GM10248 (cell line): ENCODE measurements at regions of chr14 and their contacts with region 1.

Region 1: DNA sequence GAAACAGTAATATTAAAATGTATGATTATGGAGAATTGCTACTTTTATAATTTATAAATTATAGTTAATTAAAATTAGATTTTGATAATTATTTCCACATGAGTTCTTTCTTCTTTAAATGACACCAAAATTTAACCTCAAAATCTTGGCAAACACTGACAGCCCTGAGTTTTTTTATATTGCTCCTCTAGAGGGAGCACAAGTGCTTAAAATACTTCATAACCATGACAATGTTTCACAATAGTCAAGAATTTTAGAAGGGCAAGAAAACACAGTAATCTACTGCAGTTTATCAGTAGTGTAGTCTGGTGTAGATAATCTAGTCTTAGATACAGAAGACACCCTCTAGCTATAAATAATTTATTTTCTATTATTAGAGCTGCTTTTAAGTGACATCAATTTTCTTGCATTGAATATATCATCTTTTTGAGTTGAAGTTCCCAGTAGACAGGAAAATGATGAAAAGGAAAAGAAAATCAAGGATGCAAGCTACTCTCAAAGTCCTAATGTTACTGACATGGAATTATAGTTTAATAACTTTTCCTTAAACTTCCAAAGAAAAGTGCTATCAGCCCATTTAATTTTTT is 14.3 kb upstream of the PTGER2 start:
- DNase-seq: peak; percentile 57
- CTCF ChIP-seq: peak; percentile 66

Region 2: DNA sequence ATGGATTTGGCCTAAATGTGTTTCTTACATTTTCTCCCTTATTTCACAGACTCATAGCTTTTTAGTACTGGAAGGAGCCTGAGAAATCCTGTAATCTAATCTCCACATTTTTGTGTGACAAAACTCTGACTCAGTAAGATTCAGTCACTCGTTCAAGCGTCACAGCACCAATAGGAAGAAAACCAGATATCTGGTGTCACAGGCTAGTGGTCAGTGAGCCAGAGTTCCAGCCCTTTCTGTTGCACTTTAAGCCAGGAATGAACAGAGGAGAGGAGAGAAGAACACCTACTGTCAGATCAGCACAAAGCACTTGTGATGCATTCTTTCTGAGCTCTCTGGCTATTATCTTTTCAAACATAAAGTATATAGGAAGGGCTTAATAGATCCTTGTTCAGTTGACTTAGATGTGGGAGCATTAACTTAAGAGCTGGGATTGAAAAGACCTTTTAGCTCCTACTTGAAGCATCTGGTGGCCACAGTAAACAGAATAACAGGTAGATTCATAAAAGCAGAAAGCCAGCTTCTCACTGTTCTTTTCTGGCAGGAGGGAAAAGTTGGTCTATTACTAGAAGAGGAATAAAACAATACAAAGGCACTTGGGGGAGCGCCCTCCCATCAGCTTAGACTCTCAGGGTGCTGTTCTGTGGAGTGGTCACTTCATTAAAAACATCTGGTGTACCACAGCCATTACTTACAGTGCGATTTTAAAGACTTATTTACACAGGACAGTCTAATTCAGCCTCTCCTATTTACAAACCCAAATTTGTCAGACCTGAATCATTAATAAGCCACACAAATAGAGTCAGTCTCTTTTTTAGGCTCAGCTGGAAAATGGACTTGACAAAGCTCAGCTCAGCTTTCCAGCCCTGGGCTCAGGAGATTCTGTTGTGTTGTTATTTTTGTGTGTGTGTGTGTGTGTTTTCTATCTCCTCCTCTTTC is 218.7 kb before region 1 on chr14:
- CTCF ChIA-PET with region 1: no interaction called
- POLR2A ChIA-PET with region 1: no interaction called
- DNase-seq: no peak
- CTCF ChIP-seq: no peak

Region 3: DNA sequence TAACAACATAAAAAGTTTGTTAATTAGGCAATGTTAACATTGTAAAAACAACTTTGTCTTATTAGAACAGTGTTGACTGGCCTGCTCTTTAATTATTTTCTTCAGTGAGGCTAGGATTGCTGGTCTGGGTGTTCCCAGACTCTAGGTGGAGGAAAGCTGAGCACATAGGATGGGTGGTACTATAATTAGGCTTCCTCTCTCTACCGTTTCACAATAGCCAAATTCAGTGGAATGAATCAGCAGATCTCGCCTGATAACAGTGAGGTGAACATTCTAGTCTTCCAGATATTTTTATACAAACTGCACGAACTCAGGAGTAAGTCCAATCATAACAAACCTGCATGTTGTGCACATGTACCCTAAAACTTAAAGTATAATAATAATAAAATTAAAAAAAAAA is 20.4 kb before region 1 on chr14:
- CTCF ChIA-PET with region 1: interaction called, 10 read pairs
- POLR2A ChIA-PET with region 1: no interaction called
- DNase-seq: no peak
- CTCF ChIP-seq: no peak

Region 4: DNA sequence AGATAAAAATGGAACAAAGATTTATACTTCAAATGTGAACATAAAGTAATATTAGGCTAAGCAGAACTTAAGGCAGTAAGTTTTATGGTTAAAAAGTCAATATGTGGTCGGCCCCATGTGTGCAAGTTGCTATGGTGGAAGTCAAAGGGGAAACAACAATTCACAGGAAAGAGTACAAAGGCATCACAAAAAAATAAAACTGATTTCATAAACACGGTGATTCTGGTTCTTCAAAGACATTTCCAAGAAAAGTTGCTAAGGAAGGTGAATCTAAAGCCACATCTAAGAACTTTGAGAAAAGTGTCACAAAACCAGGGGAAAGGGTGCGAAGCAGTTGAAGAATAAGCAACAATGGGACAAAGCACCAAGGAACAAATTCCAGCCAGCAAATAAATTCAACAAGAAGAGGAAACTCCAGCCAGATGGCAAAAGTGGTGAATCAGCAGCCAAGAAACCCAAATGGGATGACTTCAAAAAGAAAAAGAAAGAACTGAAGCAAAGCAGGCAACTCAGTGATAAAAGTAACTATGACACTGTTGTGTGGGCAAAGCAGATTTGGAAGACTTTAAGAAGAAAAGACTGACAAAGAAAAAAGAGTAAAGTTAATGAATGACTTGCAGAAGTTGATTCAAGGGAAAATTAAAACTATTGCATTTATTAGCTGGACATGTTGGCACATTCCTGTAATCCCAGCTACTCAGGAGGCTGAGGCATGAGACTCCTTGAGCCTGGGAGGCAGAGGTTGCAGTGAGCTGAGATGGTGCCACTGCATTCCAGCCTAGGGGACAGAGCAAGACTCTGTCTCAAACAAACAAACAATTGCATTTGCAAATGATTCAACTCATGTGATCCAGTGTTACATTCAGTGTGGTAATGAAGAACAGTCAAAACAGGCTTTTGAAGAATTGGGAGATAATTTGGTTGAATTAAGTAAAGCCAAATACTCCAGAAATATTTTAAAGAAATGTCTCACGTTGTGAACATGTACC is 12.8 kb before region 1 on chr14:
- CTCF ChIA-PET with region 1: interaction called, 12 read pairs
- POLR2A ChIA-PET with region 1: no interaction called
- DNase-seq: no peak
- CTCF ChIP-seq: no peak